K562 (cell line): ENCODE measurements at regions of chr1 and their contacts with region 1.

Region 1: GRCh38 chr1:230772457-230773395 is 25.5 kb downstream of the CAPN9 start:
- DNase-seq: peak in 3 of 4 experiments; percentile 28 to 56 (median 46)
- ATAC-seq: peak; percentile 83
- H3K4me3 ChIP-seq: no peak overlapping the region
- H3K27ac ChIP-seq: no peak overlapping the region
- H3K4me1 ChIP-seq: no peaks in the 10 kb centered on the region
- H3K27me3 ChIP-seq: peaks cover 24 to 53% of the 10 kb centered on the region in 2 experiments
- CTCF ChIP-seq: peak; percentile 64 to 82 (median 74)
- EP300 ChIP-seq: no peak
- POLR2A ChIP-seq: no peak
- RAD21 ChIP-seq: peak in 1 of 2 experiments; percentile 87; a peak in 3 of 4 replicates

Region 2: DNA sequence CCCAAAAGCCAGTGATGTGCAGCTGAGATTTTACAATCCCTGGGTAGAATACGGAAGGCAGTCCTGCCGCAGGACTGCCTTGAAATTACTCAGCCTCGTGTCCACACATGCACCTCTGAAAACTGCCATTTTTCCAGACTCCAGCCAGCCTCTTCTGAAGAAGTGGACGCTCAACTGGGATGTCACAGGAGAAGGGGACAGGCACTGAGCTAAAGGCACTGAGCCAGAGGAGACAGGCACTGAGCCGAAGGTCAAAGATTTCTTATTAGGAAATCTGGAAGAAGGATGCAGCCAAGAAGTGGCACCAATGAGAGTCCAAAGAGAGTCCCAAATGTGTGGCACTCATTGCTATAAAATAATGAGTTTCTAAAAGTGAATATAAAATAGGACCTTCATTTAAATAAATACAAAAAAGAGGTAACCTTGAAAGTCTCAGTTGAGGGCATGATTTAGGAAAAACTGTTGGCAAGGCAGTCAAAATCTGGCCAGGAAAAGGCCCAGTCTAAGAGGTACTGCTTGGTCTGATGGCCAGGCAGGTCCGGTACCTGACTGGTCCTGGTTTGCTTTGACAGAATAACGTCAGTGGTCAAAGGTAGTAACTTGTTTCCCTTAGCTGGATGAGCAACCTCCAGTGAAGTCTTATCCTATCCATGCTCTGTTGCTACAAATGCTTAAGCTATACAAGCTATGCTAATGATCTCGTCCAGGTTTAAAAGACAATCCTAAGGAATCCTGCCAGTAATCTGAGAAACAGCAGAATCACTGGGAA is 431.8 kb before region 1 on chr1:
- CTCF ChIA-PET with region 1: no interaction called
- POLR2A ChIA-PET with region 1: no interaction called
- in situ Hi-C with region 1: no loop called
- intact Hi-C with region 1: loop called (anchors 10 kb)
- DNase-seq: no peak
- ATAC-seq: no peak
- H3K4me3 ChIP-seq: no peak overlapping the region
- H3K27ac ChIP-seq: no peak overlapping the region
- H3K4me1 ChIP-seq: no peaks in the 10 kb centered on the region
- H3K27me3 ChIP-seq: peaks cover 45 to 64% of the 10 kb centered on the region in 2 experiments
- CTCF ChIP-seq: no peak
- EP300 ChIP-seq: no peak
- POLR2A ChIP-seq: no peak
- RAD21 ChIP-seq: no peak

Region 3: DNA sequence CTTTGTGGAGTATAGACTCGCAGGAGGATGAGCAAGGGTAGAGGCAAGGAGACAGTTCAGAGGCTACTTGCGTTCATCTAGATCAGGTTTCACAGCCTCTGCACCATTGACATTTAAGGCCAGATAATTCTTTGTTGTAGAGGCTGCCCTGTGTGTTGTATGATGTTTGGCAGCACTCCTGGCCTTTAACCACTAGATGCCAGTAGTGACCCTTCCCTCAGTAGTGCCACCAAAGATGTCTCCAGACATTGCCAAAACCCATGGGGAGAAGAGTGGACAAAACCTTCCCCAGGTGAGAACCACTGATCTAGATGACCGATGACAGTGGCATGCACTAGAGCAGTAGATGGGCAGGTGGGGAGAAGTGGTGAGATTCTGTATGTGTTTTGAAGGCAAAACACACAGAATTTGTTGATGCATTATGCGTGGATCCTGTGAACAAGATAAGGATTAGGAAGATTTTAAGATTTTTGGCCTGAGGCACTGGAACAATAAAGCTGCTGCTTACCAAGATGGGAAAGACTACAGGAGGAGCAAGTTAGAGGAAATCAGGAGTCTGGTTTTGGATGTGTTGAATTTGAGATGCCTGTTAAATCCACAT is 140.4 kb before region 1 on chr1:
- CTCF ChIA-PET with region 1: no interaction called
- POLR2A ChIA-PET with region 1: no interaction called
- in situ Hi-C with region 1: no loop called
- intact Hi-C with region 1: loop called (anchors 1 kb)
- DNase-seq: peak in 2 of 4 experiments; percentile 24 to 47
- ATAC-seq: peak; percentile 91
- H3K4me3 ChIP-seq: no peak overlapping the region
- H3K27ac ChIP-seq: no peak overlapping the region
- H3K4me1 ChIP-seq: no peaks in the 10 kb centered on the region
- H3K27me3 ChIP-seq: peaks cover 4 to 12% of the 10 kb centered on the region in 2 experiments; a peak in 3 of 5 replicates
- CTCF ChIP-seq: peak; percentile 62 to 78 (median 70)
- EP300 ChIP-seq: no peak
- POLR2A ChIP-seq: no peak
- RAD21 ChIP-seq: peak; percentile 60 to 77

Region 4: GRCh38 chr1:230696722-230697437 is 75.8 kb before region 1 on chr1:
- CTCF ChIA-PET with region 1: no interaction called
- POLR2A ChIA-PET with region 1: no interaction called
- in situ Hi-C with region 1: no loop called
- intact Hi-C with region 1: loop called (anchors 5 kb)
- DNase-seq: peak in 2 of 4 experiments; percentile 18 to 24
- ATAC-seq: peak; percentile 64
- H3K4me3 ChIP-seq: no peak overlapping the region
- H3K27ac ChIP-seq: no peak overlapping the region
- H3K4me1 ChIP-seq: no peaks in the 10 kb centered on the region
- H3K27me3 ChIP-seq: peaks cover 24 to 33% of the 10 kb centered on the region in 2 experiments
- CTCF ChIP-seq: peak; percentile 12 to 32 (median 13); a peak in 2 of 6 replicates
- EP300 ChIP-seq: no peak
- POLR2A ChIP-seq: no peak
- RAD21 ChIP-seq: no peak